ENCODE measurements at regions of chr10 and their contacts with region 1.

Region 1: GRCh38 chr10:97210543-97210961 is 24.8 kb upstream of the SLIT1 start:
- DNase-seq: peak; percentile 81
- H3K4me3 Mint-ChIP-seq: no peak overlapping the region
- H3K27ac Mint-ChIP-seq: no peak overlapping the region
- H3K4me1 Mint-ChIP-seq: no peaks in the 10 kb centered on the region
- H3K27me3 Mint-ChIP-seq: no peaks in the 10 kb centered on the region

Region 2: GRCh38 chr10:96570983-96571964 is 639.3 kb before region 1 on chr10:
- CTCF ChIA-PET with region 1: no interaction called
- POLR2A ChIA-PET with region 1: no interaction called
- intact Hi-C with region 1: no loop called
- DNase-seq: no peak
- H3K4me3 Mint-ChIP-seq: no peak overlapping the region
- H3K27ac Mint-ChIP-seq: no peak overlapping the region
- H3K4me1 Mint-ChIP-seq: peaks cover 55% of the 10 kb centered on the region
- H3K27me3 Mint-ChIP-seq: no peaks in the 10 kb centered on the region

Region 3: GRCh38 chr10:97010695-97011206 is 199.8 kb before region 1 on chr10:
- CTCF ChIA-PET with region 1: no interaction called
- POLR2A ChIA-PET with region 1: no interaction called
- intact Hi-C with region 1: no loop called
- DNase-seq: no peak
- H3K4me3 Mint-ChIP-seq: no peak overlapping the region
- H3K27ac Mint-ChIP-seq: no peak overlapping the region
- H3K4me1 Mint-ChIP-seq: no peaks in the 10 kb centered on the region
- H3K27me3 Mint-ChIP-seq: no peaks in the 10 kb centered on the region

Region 4: GRCh38 chr10:97037365-97038361 is 172.9 kb before region 1 on chr10:
- CTCF ChIA-PET with region 1: interaction called, 57 read pairs
- POLR2A ChIA-PET with region 1: no interaction called
- intact Hi-C with region 1: loop called (anchors 1 kb)
- DNase-seq: peak; percentile 80
- H3K4me3 Mint-ChIP-seq: peak overlapping the region; percentile 49
- H3K27ac Mint-ChIP-seq: no peak overlapping the region
- H3K4me1 Mint-ChIP-seq: peaks cover 8% of the 10 kb centered on the region
- H3K27me3 Mint-ChIP-seq: peaks cover 8% of the 10 kb centered on the region

Region 5: GRCh38 chr10:97138174-97138573 is 72.4 kb before region 1 on chr10:
- CTCF ChIA-PET with region 1: interaction called, 17 read pairs
- POLR2A ChIA-PET with region 1: no interaction called
- intact Hi-C with region 1: no loop called
- DNase-seq: no peak
- H3K4me3 Mint-ChIP-seq: no peak overlapping the region
- H3K27ac Mint-ChIP-seq: no peak overlapping the region
- H3K4me1 Mint-ChIP-seq: no peaks in the 10 kb centered on the region
- H3K27me3 Mint-ChIP-seq: peaks cover 23% of the 10 kb centered on the region

Region 6: DNA sequence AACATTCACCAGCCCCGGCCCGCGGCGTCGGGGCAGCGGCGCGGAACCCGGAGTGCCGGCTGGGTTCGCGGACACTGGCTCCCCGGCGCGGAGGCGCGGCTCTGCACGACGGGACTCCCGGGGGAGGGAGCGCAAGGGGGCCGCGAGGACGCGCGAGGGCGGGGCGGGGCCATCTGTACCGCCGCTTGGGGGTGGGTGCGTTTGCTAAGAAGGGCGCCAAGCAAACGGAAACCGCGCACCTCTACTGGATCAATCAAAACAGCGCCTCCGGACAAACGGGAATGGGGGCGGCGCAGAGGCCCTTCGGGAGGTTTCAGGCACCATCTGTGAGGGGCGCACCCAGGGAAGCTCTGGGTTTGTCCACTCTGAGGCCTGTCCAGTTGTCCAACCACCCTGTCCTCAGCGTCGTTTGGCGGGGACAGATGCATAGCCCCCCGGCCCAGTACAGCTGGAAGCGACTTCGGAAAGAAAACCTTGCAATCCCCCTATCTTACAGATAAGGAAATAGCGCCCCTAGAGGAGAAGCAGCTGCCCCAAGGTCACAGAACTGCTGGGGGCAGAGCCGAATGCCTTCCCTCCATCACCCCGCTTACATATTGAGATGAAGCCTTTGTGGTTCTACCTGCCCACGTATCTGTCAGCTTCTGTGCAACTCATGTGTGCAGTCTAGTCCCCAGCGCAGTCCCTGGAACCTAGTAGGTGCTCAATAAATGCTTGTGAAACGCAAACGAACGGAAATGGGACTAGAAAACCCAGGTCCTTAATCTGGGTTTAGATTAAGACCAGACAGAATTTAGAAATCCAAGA is 14.1 kb before region 1 on chr10:
- CTCF ChIA-PET with region 1: interaction called, 180 read pairs
- POLR2A ChIA-PET with region 1: no interaction called
- intact Hi-C with region 1: no loop called
- DNase-seq: peak; percentile 73
- H3K4me3 Mint-ChIP-seq: peak overlapping the region; percentile 64
- H3K27ac Mint-ChIP-seq: no peak overlapping the region
- H3K4me1 Mint-ChIP-seq: peaks cover 10% of the 10 kb centered on the region
- H3K27me3 Mint-ChIP-seq: peaks cover 24% of the 10 kb centered on the region

Region 7: GRCh38 chr10:97234400-97234799 is 23.8 kb after region 1 on chr10:
- CTCF ChIA-PET with region 1: interaction called, 44 read pairs
- POLR2A ChIA-PET with region 1: no interaction called
- intact Hi-C with region 1: no loop called
- DNase-seq: no peak
- H3K4me3 Mint-ChIP-seq: no peak overlapping the region
- H3K27ac Mint-ChIP-seq: no peak overlapping the region
- H3K4me1 Mint-ChIP-seq: peaks cover 18% of the 10 kb centered on the region
- H3K27me3 Mint-ChIP-seq: no peaks in the 10 kb centered on the region

Region 8: GRCh38 chr10:97321032-97321803 is 110.7 kb after region 1 on chr10:
- CTCF ChIA-PET with region 1: no interaction called
- POLR2A ChIA-PET with region 1: no interaction called
- intact Hi-C with region 1: no loop called
- DNase-seq: no peak
- H3K4me3 Mint-ChIP-seq: peak overlapping the region; percentile 81
- H3K27ac Mint-ChIP-seq: no peak overlapping the region
- H3K4me1 Mint-ChIP-seq: peaks cover 24% of the 10 kb centered on the region
- H3K27me3 Mint-ChIP-seq: peaks cover 6% of the 10 kb centered on the region

Region 9: GRCh38 chr10:98555021-98555619 is 1344.6 kb after region 1 on chr10:
- CTCF ChIA-PET with region 1: no interaction called
- POLR2A ChIA-PET with region 1: no interaction called
- intact Hi-C with region 1: no loop called
- DNase-seq: no peak
- H3K4me3 Mint-ChIP-seq: no peak overlapping the region
- H3K27ac Mint-ChIP-seq: no peak overlapping the region
- H3K4me1 Mint-ChIP-seq: no peaks in the 10 kb centered on the region
- H3K27me3 Mint-ChIP-seq: peaks cover 10% of the 10 kb centered on the region